A673 (cell line): ENCODE measurements at regions of chr6 and their contacts with region 1.

Region 1: DNA sequence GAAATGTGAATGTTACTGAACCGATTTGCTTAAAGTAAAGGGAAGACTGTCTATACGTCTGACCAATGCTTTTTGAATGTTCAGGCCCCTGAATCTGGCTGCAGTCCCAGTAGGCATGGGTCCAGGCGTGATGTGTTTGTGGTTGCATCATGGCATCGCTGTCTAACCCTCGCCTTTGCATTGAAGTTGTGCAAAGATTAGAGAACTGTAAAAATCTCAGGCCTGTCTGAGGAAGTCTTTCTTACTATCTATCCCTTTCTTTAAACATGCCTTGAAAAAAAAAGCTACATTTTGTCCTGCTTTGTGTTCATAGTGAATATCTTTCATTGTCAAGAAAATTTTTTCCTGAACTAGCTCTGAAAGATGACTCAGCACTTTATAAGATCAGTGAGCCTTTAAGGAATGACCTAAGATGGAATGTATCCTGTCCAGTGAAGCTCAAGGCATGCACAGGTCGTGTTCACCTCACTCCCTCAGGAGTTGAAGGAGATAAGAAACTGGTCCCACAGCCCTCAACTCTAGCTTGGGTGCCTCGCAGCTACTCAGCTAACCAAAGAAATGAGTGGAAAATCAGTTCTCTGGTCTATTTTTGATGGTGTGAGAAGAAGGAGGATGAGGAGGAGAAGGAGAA is 48.5 kb downstream of the TPD52L1 start:
- DNase-seq: peak; percentile 68
- H3K4me3 ChIP-seq: no peak overlapping the region
- H3K27ac ChIP-seq: peak overlapping the region; percentile 73
- H3K4me1 ChIP-seq: peaks cover 19% of the 10 kb centered on the region
- H3K27me3 ChIP-seq: no peaks in the 10 kb centered on the region
- CTCF ChIP-seq: no peak

Region 2: DNA sequence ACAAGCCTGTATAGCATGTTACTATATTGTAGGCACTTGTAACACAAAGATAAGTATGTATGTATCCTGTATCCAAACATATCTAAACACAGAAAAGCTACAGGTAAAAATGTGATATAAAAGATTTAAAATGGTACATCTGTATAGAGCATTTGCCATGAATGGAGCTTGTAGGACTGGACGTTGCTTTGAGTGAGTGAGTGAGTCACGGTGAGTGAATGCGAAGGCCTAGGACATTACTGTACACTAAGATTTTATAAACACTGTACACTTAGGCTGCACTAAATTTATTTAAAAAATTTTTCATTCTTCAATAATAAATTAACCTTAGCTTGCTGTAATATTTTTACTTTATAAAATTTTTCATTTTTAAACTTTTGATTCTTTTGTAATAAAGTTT is 1261.5 kb before region 1 on chr6:
- CTCF ChIA-PET with region 1: interaction called, 12 read pairs
- POLR2A ChIA-PET with region 1: no interaction called
- intact Hi-C with region 1: no loop called
- DNase-seq: no peak
- H3K4me3 ChIP-seq: no peak overlapping the region
- H3K27ac ChIP-seq: no peak overlapping the region
- H3K4me1 ChIP-seq: no peaks in the 10 kb centered on the region
- H3K27me3 ChIP-seq: no peaks in the 10 kb centered on the region
- CTCF ChIP-seq: no peak